PC-9 (cell line): ENCODE measurements at regions of chr3 and their contacts with region 1.

Region 1: GRCh38 chr3:45224824-45225464 is 1.1 kb downstream of the TMEM158 start:
- DNase-seq: peak in 1 of 2 experiments; percentile 78
- H3K4me3 ChIP-seq: peak overlapping the region; percentile 76
- H3K27ac ChIP-seq: peak overlapping the region; percentile 64; the same call in 1 of the 2 replicates
- H3K4me1 ChIP-seq: peaks cover 30% of the 10 kb centered on the region
- H3K27me3 ChIP-seq: no peaks in the 10 kb centered on the region
- CTCF ChIP-seq: peak; percentile 39

Region 2: DNA sequence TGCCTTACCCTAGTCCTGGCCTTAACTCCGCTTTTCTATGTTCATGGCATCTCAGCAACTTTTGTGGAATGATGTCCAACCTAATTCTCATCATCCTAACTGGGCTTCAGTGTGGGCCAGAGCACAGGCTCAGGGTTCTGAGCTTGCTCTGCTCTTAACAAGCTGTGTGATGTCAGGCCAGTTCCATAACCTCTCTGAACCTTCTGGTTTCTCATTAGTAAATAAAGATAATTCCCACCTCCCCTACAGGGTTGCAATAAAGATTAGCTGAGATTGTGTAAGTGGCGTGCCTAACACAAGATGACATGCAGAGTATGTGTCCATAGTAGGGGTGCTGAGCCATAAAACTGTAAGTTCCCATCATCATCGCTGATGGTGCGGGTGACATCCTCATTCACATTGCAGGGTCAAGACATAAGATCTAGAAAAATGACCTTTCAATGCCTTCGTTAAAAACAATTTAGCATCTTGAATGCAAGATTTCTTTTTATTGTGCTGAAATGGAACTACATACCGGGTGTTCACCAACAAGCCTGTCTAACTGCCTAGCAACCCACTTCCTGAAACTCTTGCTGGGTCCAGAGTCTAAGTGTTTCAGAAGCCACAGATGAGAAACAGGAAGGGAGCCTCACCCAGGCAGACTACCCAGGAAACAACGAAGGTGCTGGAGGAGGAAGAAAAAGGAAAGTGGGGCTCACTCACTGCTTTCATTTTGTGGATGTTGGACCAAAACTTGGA is 115.0 kb before region 1 on chr3:
- CTCF ChIA-PET with region 1: no interaction called
- POLR2A ChIA-PET with region 1: no interaction called
- intact Hi-C with region 1: no loop called
- DNase-seq: no peak
- H3K4me3 ChIP-seq: no peak overlapping the region
- H3K27ac ChIP-seq: no peak overlapping the region
- H3K4me1 ChIP-seq: no peaks in the 10 kb centered on the region
- H3K27me3 ChIP-seq: no peaks in the 10 kb centered on the region
- CTCF ChIP-seq: no peak

Region 3: DNA sequence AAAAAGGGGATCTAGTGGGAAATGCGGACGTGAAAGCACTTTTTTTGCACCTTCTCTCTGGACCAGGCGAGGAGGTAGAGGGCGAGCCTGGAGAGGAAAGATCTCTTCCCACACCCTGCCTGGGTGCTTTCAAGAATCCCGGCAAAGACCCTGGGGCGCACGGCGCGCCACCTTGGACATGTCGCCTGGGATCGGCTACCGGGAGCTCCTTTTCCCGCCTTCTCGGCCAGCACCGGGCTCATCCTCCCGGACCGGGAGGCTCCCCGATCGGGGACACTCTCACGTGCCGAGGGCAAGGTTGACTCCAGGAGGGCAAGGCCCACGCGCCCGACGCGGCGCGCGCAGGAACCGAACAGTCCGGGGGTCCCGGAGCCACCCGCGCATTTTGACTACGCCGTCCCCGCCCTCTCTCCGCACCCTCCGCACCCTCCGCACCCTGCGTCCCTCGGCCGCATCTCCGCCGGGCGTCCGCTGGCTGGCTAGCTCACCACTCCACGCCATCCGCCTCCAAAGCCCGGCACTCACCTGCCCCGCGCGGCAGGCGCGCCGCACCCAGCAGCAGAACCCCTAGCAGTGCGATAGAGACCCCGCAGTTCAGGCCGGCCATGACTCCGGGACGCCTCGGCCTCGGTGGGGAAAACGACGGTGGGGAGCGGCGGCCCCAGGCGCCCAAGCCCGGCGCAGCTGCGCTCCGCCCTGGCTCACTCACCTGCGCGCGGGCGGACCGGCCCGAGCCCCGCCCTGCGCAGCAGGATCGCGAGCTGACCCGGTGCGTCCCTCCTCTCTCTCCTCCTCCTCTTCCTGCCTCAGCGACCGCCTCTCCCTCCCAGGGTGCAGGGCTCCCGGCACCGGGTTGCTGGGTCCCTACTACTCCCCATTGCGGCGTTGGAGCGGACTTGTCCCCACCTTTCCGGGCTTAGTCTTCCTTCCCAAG is 79.0 kb before region 1 on chr3 and contains the start of gene CDCP1:
- CTCF ChIA-PET with region 1: no interaction called
- POLR2A ChIA-PET with region 1: interaction called, 10 read pairs
- intact Hi-C with region 1: no loop called
- DNase-seq: peak; percentile 43 to 78
- H3K4me3 ChIP-seq: peak within 1 kb of the TSS; percentile 83
- H3K27ac ChIP-seq: peak within 1 kb of the TSS; percentile 85
- H3K4me1 ChIP-seq: peaks cover 34% of the 10 kb centered on the region
- H3K27me3 ChIP-seq: no peaks in the 10 kb centered on the region
- CTCF ChIP-seq: no peak
- total RNA-seq, gene CDCP1: 75.7 and 85.0 TPM in 2 replicates

Region 4: GRCh38 chr3:45343947-45344346 is 119.0 kb after region 1 on chr3:
- CTCF ChIA-PET with region 1: interaction called, 3 read pairs
- POLR2A ChIA-PET with region 1: no interaction called
- intact Hi-C with region 1: loop called (anchors 10 kb)
- DNase-seq: peak in 1 of 2 experiments; percentile 52
- H3K4me3 ChIP-seq: no peak overlapping the region
- H3K27ac ChIP-seq: no peak overlapping the region
- H3K4me1 ChIP-seq: no peaks in the 10 kb centered on the region
- H3K27me3 ChIP-seq: no peaks in the 10 kb centered on the region
- CTCF ChIP-seq: 0 out of 2 replicates have a peak, but pooled peaks have one; percentile 15

Region 5: DNA sequence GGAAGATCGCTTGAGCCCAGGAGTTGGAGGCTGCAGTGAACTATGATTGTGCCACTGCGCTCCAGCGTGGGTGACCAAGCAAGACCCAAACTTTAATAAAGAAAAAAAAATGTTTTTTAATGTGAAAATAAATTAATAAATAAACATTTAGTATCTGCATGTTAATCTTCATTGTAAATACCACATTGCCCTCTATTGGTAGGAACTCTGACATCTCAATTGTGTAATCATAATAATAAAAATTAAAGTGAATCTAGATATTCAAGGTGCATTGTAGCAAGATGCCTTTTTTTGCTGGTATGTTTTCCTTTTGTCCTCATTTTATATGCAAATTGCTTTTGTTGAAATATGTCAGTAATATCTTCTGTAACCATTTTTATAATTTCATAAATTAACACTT is 274.6 kb after region 1 on chr3:
- CTCF ChIA-PET with region 1: no interaction called
- POLR2A ChIA-PET with region 1: no interaction called
- intact Hi-C with region 1: loop called (anchors 1 kb)
- DNase-seq: peak; percentile 4 to 50
- H3K4me3 ChIP-seq: no peak overlapping the region
- H3K27ac ChIP-seq: no peak overlapping the region
- H3K4me1 ChIP-seq: no peaks in the 10 kb centered on the region
- H3K27me3 ChIP-seq: no peaks in the 10 kb centered on the region
- CTCF ChIP-seq: peak; percentile 71

Region 6: DNA sequence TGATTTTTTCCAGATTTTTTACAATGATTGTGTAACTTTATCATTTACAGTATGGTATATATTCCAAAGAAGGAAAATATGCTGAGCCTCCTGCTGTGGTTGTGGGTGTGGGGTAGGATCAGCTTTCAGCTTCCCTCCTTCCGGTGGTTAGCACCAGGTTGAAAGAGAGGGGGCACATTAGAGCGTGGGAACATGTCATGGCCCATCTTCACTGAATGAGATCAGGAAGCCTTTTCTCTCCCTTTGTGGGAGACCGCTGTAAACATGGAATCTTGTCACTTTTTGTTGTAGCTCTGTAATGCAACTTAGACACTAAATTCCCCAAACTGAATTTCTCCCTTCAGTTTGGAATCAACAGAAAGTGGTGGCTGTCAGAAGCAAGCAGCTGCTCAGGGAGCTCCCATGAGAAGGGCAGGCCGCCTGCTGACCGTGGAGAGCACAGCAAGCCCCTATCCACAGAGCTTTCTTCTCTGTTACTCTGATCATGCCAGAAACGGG is 282.9 kb after region 1 on chr3:
- CTCF ChIA-PET with region 1: no interaction called
- POLR2A ChIA-PET with region 1: no interaction called
- intact Hi-C with region 1: loop called (anchors 1 kb)
- DNase-seq: no peak
- H3K4me3 ChIP-seq: no peak overlapping the region
- H3K27ac ChIP-seq: no peak overlapping the region
- H3K4me1 ChIP-seq: no peaks in the 10 kb centered on the region
- H3K27me3 ChIP-seq: no peaks in the 10 kb centered on the region
- CTCF ChIP-seq: no peak